MCF 10A (cell line): ENCODE measurements at regions of chr17 and their contacts with region 1.

Region 1: GRCh38 chr17:45640141-45640850 is 143.8 kb upstream of the CRHR1 start:
- DNase-seq: peak; percentile 76
- H3K4me3 Mint-ChIP-seq: no peak overlapping the region
- H3K27ac Mint-ChIP-seq: no peak overlapping the region
- H3K4me1 Mint-ChIP-seq: no peaks in the 10 kb centered on the region
- H3K27me3 Mint-ChIP-seq: peaks cover 4% of the 10 kb centered on the region
- CTCF ChIP-seq: peak; percentile 96

Region 2: GRCh38 chr17:45719335-45720071 is 79.2 kb after region 1 on chr17:
- CTCF ChIA-PET with region 1: interaction called, 3 read pairs
- POLR2A ChIA-PET with region 1: no interaction called
- intact Hi-C with region 1: loop called (anchors 5 kb)
- DNase-seq: peak; percentile 83
- H3K4me3 Mint-ChIP-seq: no peak overlapping the region
- H3K27ac Mint-ChIP-seq: no peak overlapping the region
- H3K4me1 Mint-ChIP-seq: peaks cover 14% of the 10 kb centered on the region
- H3K27me3 Mint-ChIP-seq: peaks cover 36% of the 10 kb centered on the region
- CTCF ChIP-seq: peak; percentile 65

Region 3: DNA sequence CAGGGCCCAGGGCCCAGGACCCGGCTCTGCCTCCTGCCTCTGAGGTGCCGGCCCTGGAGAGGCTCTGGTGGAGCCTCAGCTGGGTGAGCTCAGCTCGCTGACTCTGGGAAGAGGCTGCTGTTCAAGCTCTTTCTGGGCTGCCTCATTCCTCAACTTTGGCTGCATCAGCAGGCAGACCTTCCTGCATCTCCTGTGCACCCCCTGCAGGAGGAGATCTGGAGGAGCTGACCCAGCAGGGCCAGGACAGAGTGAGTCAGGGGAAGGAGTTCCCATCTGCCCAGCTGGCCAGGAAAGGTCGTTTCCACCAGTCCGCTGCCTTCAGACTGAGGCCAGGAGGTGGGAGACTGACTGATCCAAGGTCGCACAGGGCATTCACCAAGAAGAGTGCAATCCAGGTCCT is 154.5 kb after region 1 on chr17:
- CTCF ChIA-PET with region 1: interaction called, 3 read pairs
- POLR2A ChIA-PET with region 1: no interaction called
- intact Hi-C with region 1: loop called (anchors 1 kb)
- DNase-seq: peak; percentile 22
- H3K4me3 Mint-ChIP-seq: no peak overlapping the region
- H3K27ac Mint-ChIP-seq: no peak overlapping the region
- H3K4me1 Mint-ChIP-seq: peaks cover 7% of the 10 kb centered on the region
- H3K27me3 Mint-ChIP-seq: peaks cover 79% of the 10 kb centered on the region
- CTCF ChIP-seq: no peak

Region 4: DNA sequence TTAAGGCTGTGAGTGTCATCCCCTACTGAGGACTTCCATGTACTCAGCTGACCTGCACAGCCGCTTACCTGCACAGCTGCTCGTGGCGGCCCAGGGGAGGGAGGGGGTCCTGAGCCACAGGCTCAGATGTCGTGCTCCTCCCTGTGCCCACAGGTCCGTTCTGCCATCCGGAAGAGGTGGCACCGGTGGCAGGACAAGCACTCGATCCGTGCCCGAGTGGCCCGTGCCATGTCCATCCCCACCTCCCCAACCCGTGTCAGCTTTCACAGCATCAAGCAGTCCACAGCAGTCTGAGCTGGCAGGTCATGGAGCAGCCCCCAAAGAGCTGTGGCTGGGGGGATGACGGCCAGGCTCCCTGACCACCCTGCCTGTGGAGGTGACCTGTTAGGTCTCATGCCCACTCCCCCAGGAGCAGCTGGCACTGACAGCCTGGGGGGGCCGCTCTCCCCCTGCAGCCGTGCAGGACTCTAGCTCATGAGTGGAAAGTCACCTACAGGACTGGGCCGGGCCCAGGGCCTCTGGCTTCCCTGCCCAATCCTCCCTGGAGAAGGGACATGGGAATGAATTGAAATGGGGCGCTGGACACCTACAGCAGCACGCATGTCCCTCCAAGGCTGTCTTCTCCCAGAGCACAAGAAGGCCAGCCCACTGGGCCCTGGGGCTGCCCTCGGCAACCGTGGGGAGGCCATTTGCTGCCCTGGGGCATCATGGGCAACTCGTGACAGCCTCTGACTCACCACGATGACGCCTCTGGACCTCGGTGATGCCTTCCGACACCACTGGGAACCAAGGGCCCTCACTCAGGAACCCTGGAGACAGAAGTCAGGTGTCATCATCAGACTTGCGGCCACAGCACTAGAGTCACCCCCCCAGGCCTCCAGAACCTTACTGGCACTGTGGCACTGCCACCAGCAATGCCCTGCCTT is 194.4 kb after region 1 on chr17:
- CTCF ChIA-PET with region 1: interaction called, 76 read pairs
- POLR2A ChIA-PET with region 1: interaction called, 7 read pairs
- intact Hi-C with region 1: loop called (anchors 1 kb)
- DNase-seq: peak; percentile 35
- H3K4me3 Mint-ChIP-seq: no peak overlapping the region
- H3K27ac Mint-ChIP-seq: no peak overlapping the region
- H3K4me1 Mint-ChIP-seq: no peaks in the 10 kb centered on the region
- H3K27me3 Mint-ChIP-seq: peaks cover 22% of the 10 kb centered on the region
- CTCF ChIP-seq: no peak